Activated CD4-positive, alpha-beta T cell treated with anti-CD3 and anti-CD28 coated beads for 36 hours (primary cell): ENCODE measurements at regions of chr7 and their contacts with region 1.

Region 1: GRCh38 chr7:50142425-50143017 is 49.5 kb upstream of the ZPBP start:
- DNase-seq: peak; percentile 51
- ATAC-seq: peak; percentile 63
- H3K4me3 Mint-ChIP-seq: peak overlapping the region; percentile 53
- H3K27ac Mint-ChIP-seq: peak overlapping the region; percentile 94
- H3K4me1 Mint-ChIP-seq: peaks cover 43% of the 10 kb centered on the region
- H3K27me3 Mint-ChIP-seq: no peaks in the 10 kb centered on the region

Region 2: GRCh38 chr7:50156706-50157105 is 14.2 kb after region 1 on chr7:
- CTCF ChIA-PET with region 1: interaction called, 26 read pairs
- POLR2A ChIA-PET with region 1: interaction called, 6 read pairs
- intact Hi-C with region 1: loop called in 1 of 2 experiments (anchors 1 kb)
- DNase-seq: no peak
- ATAC-seq: no peak
- H3K4me3 Mint-ChIP-seq: peak overlapping the region; percentile 51
- H3K27ac Mint-ChIP-seq: peak overlapping the region; percentile 96
- H3K4me1 Mint-ChIP-seq: peaks cover 48% of the 10 kb centered on the region
- H3K27me3 Mint-ChIP-seq: no peaks in the 10 kb centered on the region

Region 3: GRCh38 chr7:50166997-50167965 is 24.8 kb after region 1 on chr7:
- CTCF ChIA-PET with region 1: interaction called, 8 read pairs
- POLR2A ChIA-PET with region 1: no interaction called
- intact Hi-C with region 1: loop called in 1 of 2 experiments (anchors 2 kb)
- DNase-seq: peak; percentile 44
- ATAC-seq: peak; percentile 61
- H3K4me3 Mint-ChIP-seq: no peak overlapping the region
- H3K27ac Mint-ChIP-seq: peak overlapping the region; percentile 87
- H3K4me1 Mint-ChIP-seq: peaks cover 55% of the 10 kb centered on the region
- H3K27me3 Mint-ChIP-seq: no peaks in the 10 kb centered on the region

Region 4: DNA sequence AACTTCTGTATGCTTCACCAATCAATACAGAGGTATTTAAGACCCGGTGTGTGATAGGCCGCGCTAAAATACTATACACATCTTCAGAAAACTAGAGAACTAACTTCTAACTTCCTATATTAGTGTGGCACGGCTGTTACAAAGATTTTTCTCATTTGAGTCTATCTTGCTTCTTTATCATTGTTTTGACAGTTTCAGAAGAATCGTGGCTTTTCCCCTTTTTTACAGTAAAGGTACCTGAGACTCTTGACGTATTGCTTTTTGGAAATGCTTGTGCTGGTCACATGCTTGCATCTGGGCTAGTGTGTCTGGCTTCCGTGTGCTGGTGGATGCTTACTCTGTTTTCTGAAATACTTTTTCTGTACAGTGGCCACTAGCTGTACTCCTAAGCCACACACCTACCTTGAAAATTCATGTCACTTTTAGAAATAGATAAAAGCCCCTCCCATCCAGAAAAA is 174.7 kb after region 1 on chr7:
- CTCF ChIA-PET with region 1: interaction called, 10 read pairs
- POLR2A ChIA-PET with region 1: no interaction called
- intact Hi-C with region 1: no loop called
- DNase-seq: peak; percentile 73
- ATAC-seq: peak; percentile 82
- H3K4me3 Mint-ChIP-seq: peak overlapping the region; percentile 95
- H3K27ac Mint-ChIP-seq: peak overlapping the region; percentile 100
- H3K4me1 Mint-ChIP-seq: peaks cover 93% of the 10 kb centered on the region
- H3K27me3 Mint-ChIP-seq: no peaks in the 10 kb centered on the region

Region 5: GRCh38 chr7:50632561-50633413 is 490.3 kb after region 1 on chr7:
- CTCF ChIA-PET with region 1: no interaction called
- POLR2A ChIA-PET with region 1: no interaction called
- intact Hi-C with region 1: loop called in 1 of 2 experiments (anchors 1 kb)
- DNase-seq: peak; percentile 72
- ATAC-seq: peak; percentile 84
- H3K4me3 Mint-ChIP-seq: no peak overlapping the region
- H3K27ac Mint-ChIP-seq: no peak overlapping the region
- H3K4me1 Mint-ChIP-seq: no peaks in the 10 kb centered on the region
- H3K27me3 Mint-ChIP-seq: peaks cover 12% of the 10 kb centered on the region